ENCODE measurements at regions of chr11 and their contacts with region 1.

Region 1: GRCh38 chr11:31870609-31871309 is 59.6 kb upstream of the PAX6 start:
- DNase-seq: peak; percentile 46
- ATAC-seq: peak; percentile 73

Region 2: GRCh38 chr11:31487848-31488247 is 382.9 kb before region 1 on chr11:
- intact Hi-C with region 1: loop called (anchors 5 kb)
- DNase-seq: no peak
- ATAC-seq: no peak